ENCODE measurements at regions of chr10 and their contacts with region 1.

Region 1: GRCh38 chr10:103554488-103555324 is 61.2 kb downstream of the NEURL1 start:
- DNase-seq: peak; percentile 83
- H3K4me3 ChIP-seq: peak overlapping the region; percentile 16 to 55 (median 48)
- H3K27ac ChIP-seq: no peak overlapping the region
- H3K4me1 ChIP-seq: peaks cover 0 to 19% (median 14%) of the 10 kb centered on the region in 4 donors
- H3K27me3 ChIP-seq: peaks cover 0 to 4% (median 2%) of the 10 kb centered on the region in 3 donors
- CTCF ChIP-seq: no peak
- EP300 ChIP-seq: no peak
- POLR2A ChIP-seq: no peak

Region 2: GRCh38 chr10:103491493-103492381 is 63.0 kb before region 1 on chr10:
- intact Hi-C with region 1: loop called (anchors 5 kb)
- DNase-seq: no peak
- H3K4me3 ChIP-seq: no peak overlapping the region
- H3K27ac ChIP-seq: peak overlapping the region in 1 of 4 donors; percentile 50
- H3K4me1 ChIP-seq: peaks cover 0 to 42% (median 35%) of the 10 kb centered on the region in 4 donors
- H3K27me3 ChIP-seq: peaks cover 9 to 36% (median 16%) of the 10 kb centered on the region in 3 donors
- CTCF ChIP-seq: no peak
- EP300 ChIP-seq: peak in 1 of 4 donors; percentile 9
- POLR2A ChIP-seq: no peak